Endothelial cell of umbilical vein (primary cell): ENCODE measurements at regions of chr16 and their contacts with region 1.

Region 1: GRCh38 chr16:84970447-84971127 is 40.7 kb downstream of the ZDHHC7 start:
- DNase-seq: peak; percentile 70
- H3K4me3 ChIP-seq: no peak overlapping the region
- H3K27ac ChIP-seq: no peak overlapping the region
- H3K4me1 ChIP-seq: no peaks in the 10 kb centered on the region
- H3K27me3 ChIP-seq: no peaks in the 10 kb centered on the region
- CTCF ChIP-seq: peak; percentile 86 to 90
- POLR2A ChIP-seq: no peak

Region 2: GRCh38 chr16:84738255-84739038 is 232.1 kb before region 1 on chr16:
- CTCF ChIA-PET with region 1: interaction called, 97 read pairs
- POLR2A ChIA-PET with region 1: no interaction called
- dilution Hi-C with region 1: no loop called
- intact Hi-C with region 1: no loop called
- DNase-seq: peak; percentile 92
- H3K4me3 ChIP-seq: no peak overlapping the region
- H3K27ac ChIP-seq: no peak overlapping the region
- H3K4me1 ChIP-seq: peaks cover 28% of the 10 kb centered on the region
- H3K27me3 ChIP-seq: no peaks in the 10 kb centered on the region
- CTCF ChIP-seq: peak; percentile 88 to 92
- POLR2A ChIP-seq: no peak

Region 3: GRCh38 chr16:84765616-84766580 is 204.7 kb before region 1 on chr16:
- CTCF ChIA-PET with region 1: interaction called, 12 read pairs
- POLR2A ChIA-PET with region 1: no interaction called
- dilution Hi-C with region 1: loop called (anchors 25 kb)
- intact Hi-C with region 1: no loop called
- DNase-seq: no peak
- H3K4me3 ChIP-seq: no peak overlapping the region
- H3K27ac ChIP-seq: no peak overlapping the region
- H3K4me1 ChIP-seq: no peaks in the 10 kb centered on the region
- H3K27me3 ChIP-seq: no peaks in the 10 kb centered on the region
- CTCF ChIP-seq: no peak
- POLR2A ChIP-seq: no peak

Region 4: GRCh38 chr16:84925092-84925772 is 45.4 kb before region 1 on chr16:
- CTCF ChIA-PET with region 1: interaction called, 73 read pairs
- POLR2A ChIA-PET with region 1: no interaction called
- dilution Hi-C with region 1: no loop called
- intact Hi-C with region 1: loop called (anchors 1 kb)
- DNase-seq: peak; percentile 23
- H3K4me3 ChIP-seq: no peak overlapping the region
- H3K27ac ChIP-seq: no peak overlapping the region
- H3K4me1 ChIP-seq: no peaks in the 10 kb centered on the region
- H3K27me3 ChIP-seq: no peaks in the 10 kb centered on the region
- CTCF ChIP-seq: peak; percentile 65 to 87
- POLR2A ChIP-seq: no peak

Region 5: GRCh38 chr16:84982434-84982833 is 11.8 kb after region 1 on chr16:
- CTCF ChIA-PET with region 1: interaction called, 12 read pairs
- POLR2A ChIA-PET with region 1: no interaction called
- dilution Hi-C with region 1: no loop called
- intact Hi-C with region 1: no loop called
- DNase-seq: no peak
- H3K4me3 ChIP-seq: no peak overlapping the region
- H3K27ac ChIP-seq: no peak overlapping the region
- H3K4me1 ChIP-seq: peaks cover 7% of the 10 kb centered on the region
- H3K27me3 ChIP-seq: no peaks in the 10 kb centered on the region
- CTCF ChIP-seq: no peak
- POLR2A ChIP-seq: no peak

Region 6: DNA sequence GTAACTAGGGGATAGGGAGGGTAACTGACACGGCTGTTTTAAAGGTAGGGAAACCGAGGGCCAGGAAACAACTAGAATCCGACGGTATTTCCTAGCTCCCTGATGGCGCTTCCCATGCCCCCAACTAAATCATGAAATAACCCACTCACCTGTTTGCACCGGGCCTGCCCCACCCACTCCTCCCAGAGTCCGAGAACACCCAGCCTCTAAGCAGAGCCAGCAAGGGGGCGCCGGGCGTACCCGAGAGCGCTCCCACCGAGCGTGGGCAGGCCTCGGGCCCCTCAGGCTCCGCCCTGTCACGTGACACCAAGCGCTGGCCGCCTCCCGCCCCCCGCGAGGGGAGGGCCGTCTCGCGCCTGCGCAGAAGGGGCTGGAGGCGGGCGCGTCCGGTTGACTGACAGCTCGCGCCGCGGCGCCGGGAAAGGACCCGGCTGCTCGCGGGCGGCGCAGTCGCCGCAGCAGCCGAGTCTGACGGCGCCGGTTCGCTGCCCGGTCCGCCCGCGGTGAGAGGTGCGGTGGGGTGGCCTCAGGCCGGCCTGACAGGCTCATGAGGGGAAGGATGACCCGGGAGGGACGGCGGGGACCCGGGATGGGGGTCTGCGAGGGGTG is 56.9 kb after region 1 on chr16 and contains the start of gene KIAA0513:
- CTCF ChIA-PET with region 1: interaction called, 11 read pairs
- POLR2A ChIA-PET with region 1: no interaction called
- dilution Hi-C with region 1: no loop called
- intact Hi-C with region 1: no loop called
- DNase-seq: peak; percentile 94
- H3K4me3 ChIP-seq: peak within 1 kb of the TSS; percentile 65 to 90 (median 90)
- H3K27ac ChIP-seq: peak within 1 kb of the TSS; percentile 73
- H3K4me1 ChIP-seq: peaks cover 24% of the 10 kb centered on the region
- H3K27me3 ChIP-seq: no peaks in the 10 kb centered on the region
- CTCF ChIP-seq: peak in 1 of 2 donors; percentile 33
- POLR2A ChIP-seq: peak; percentile 94
- total RNA-seq, gene KIAA0513: 3.6 and 4.3 TPM in 2 replicates